Heart right ventricle (tissue), 16 donors: ENCODE measurements at regions of chr17 and their contacts with region 1.

Region 1: DNA sequence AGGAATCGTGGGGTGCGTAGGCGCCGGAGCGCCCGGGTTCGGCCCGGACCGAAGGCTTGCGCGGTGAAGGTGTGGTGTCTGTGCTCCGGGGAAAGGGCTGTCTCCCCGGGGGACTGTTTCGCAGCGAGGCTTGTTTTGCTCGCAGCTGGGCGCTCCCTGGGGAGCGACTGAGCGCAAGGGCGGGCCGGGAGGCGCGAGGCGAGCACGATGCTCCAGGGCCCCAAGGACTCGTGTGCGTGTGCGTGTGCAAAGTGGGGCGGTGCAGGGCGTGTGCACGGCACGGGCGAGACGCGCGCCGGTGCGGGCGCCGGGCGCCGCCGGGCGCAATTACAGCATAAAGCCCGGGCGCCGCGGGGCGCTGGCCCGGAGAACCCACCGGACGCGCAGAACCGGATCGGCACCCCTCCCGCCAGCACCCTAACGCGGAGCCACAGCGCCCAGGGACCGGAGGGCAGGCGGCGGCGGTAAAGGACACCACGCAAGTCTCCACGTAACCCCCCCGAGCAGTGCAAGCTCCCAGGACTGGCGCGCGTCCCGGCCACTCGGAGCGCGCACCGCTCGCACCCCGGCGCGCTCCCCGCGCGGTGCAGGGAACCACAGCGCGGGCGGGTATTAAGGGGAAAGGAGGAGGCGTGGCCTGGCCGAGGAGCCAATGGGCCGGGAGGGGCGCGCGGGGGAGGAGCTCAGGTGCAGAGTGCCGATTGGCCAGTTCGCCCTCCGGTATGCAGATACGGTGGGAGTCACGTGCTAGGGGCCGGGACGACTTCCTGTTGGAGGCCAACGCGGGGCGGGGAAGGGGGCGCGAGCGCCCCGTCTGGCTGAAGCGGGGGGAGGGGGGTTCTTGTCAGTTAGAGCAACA is at the start of gene TNRC6C:
- DNase-seq: peak; percentile 100
- ATAC-seq: peak; percentile 98 to 100 (median 99)
- H3K4me3 ChIP-seq: peak within 1 kb of the TSS; percentile 66 to 99 (median 76)
- H3K27ac ChIP-seq: peak within 1 kb of the TSS; percentile 70 to 96 (median 86)
- H3K4me1 ChIP-seq: peaks cover 0 to 48% (median 35%) of the 10 kb centered on the region in 9 donors
- H3K27me3 ChIP-seq: peaks cover 0 to 40% (median 0%) of the 10 kb centered on the region in 7 donors
- CTCF ChIP-seq: peak in 4 of 9 donors; percentile 22 to 44 (median 30)
- total RNA-seq, gene TNRC6C: 17.1 to 31.4 (median 25.9) TPM

Region 2: GRCh38 chr17:77772461-77772897 is 185.6 kb before region 1 on chr17:
- intact Hi-C with region 1: loop called in 5 of 10 experiments (anchors 5 to 10 kb)
- DNase-seq: peak; percentile 73 to 76
- ATAC-seq: peak; percentile 84 to 95 (median 92)
- H3K4me3 ChIP-seq: no peak overlapping the region
- H3K27ac ChIP-seq: peak overlapping the region in 6 of 10 donors; percentile 2 to 53 (median 22)
- H3K4me1 ChIP-seq: peaks cover 8 to 16% (median 13%) of the 10 kb centered on the region in 9 donors
- H3K27me3 ChIP-seq: no peaks in the 10 kb centered on the region
- CTCF ChIP-seq: peak; percentile 56 to 90 (median 80)

Region 3: DNA sequence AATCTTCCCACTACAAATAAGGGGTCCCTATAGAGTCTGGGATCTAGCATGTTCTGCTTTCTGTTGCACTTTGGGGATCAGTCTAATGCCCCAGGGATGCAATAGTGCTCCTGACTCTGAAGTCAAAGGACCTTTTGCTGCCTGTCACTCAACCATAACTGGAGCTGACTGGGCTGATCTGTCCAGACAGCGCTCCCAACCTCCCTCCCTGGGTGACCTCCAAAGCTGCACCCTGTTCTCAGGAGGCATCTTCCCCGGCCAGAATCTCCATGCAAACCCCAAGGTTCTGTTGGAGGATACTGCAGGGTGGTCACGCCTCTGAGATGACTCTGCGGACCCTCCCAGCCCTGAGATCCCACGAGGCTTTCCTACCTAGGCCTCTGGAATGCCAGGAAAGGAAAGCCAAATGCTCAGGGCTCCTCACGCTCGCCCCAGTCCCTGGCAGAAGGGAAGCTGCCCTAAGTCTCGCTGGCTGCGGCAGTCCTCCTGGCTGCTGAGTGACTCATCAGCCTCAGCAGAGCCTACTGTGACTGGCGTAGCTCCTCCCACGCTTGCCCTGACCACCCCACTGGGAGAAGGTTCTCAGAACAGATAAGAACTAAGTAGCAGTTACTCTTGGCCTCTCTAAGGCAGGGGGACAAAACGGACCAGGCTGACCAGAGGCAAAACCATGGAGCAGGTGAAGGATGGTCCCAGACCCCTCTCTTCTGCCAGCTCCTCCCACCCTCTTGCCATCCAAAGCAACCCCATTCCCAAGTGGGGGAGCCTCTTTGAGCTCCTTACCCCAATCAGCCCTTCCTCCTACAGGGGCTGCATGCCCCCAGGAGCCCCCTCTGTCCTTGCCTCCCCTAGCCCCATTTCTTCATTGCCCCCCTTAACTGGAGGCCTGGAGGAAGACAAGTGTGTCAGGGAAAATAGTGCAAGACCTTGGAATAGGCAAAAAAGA is 123.6 kb before region 1 on chr17:
- intact Hi-C with region 1: loop called in 1 of 10 experiments (anchors 2 kb)
- DNase-seq: peak; percentile 67 to 68
- ATAC-seq: peak in 7 of 8 donors; percentile 15 to 70 (median 35)
- H3K4me3 ChIP-seq: peak overlapping the region in 1 of 10 donors; percentile 10
- H3K27ac ChIP-seq: peak overlapping the region in 7 of 10 donors; percentile 19 to 70 (median 56)
- H3K4me1 ChIP-seq: peaks cover 28 to 63% (median 48%) of the 10 kb centered on the region in 9 donors
- H3K27me3 ChIP-seq: peaks cover 0 to 3% (median 0%) of the 10 kb centered on the region in 7 donors
- CTCF ChIP-seq: no peak

Region 4: DNA sequence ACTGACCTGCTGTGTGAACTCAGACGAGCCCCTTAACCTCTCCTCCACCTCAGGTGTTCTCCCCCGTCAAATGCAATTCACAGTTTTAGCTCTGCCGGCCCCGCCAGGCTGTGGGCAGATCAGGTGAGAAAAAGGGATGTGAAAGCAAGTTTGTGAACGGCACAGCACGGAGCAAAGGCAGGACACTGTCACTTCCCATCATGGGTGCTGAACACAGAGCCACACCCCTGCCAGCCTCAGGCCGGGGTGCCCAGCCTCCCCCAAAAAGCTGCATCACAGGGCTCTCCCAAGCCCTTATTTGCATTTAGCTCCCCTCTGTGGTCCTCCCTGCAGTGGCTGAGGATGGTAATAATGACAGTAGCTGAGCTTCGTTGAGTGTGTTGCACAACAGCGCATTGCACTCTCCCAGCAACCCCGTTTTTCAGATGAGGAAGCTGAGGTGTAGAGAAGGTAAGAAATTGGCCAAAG is 88.4 kb before region 1 on chr17:
- intact Hi-C with region 1: no loop called
- DNase-seq: peak in 1 of 2 donors; percentile 14
- ATAC-seq: peak in 2 of 8 donors; percentile 18 to 19
- H3K4me3 ChIP-seq: peak overlapping the region in 1 of 10 donors; percentile 14
- H3K27ac ChIP-seq: peak overlapping the region in 1 of 10 donors; percentile 74
- H3K4me1 ChIP-seq: peaks cover 0 to 35% (median 9%) of the 10 kb centered on the region in 9 donors
- H3K27me3 ChIP-seq: no peaks in the 10 kb centered on the region
- CTCF ChIP-seq: no peak

Region 5: GRCh38 chr17:77881545-77881944 is 76.5 kb before region 1 on chr17:
- intact Hi-C with region 1: loop called in 3 of 10 experiments (anchors 5 kb)
- DNase-seq: peak; percentile 89
- ATAC-seq: peak; percentile 83 to 94 (median 92)
- H3K4me3 ChIP-seq: peak overlapping the region in 2 of 10 donors; percentile 10 to 13
- H3K27ac ChIP-seq: peak overlapping the region in 9 of 10 donors; percentile 58 to 93 (median 77)
- H3K4me1 ChIP-seq: peaks cover 25 to 57% (median 37%) of the 10 kb centered on the region in 9 donors
- H3K27me3 ChIP-seq: no peaks in the 10 kb centered on the region
- CTCF ChIP-seq: no peak

Region 6: DNA sequence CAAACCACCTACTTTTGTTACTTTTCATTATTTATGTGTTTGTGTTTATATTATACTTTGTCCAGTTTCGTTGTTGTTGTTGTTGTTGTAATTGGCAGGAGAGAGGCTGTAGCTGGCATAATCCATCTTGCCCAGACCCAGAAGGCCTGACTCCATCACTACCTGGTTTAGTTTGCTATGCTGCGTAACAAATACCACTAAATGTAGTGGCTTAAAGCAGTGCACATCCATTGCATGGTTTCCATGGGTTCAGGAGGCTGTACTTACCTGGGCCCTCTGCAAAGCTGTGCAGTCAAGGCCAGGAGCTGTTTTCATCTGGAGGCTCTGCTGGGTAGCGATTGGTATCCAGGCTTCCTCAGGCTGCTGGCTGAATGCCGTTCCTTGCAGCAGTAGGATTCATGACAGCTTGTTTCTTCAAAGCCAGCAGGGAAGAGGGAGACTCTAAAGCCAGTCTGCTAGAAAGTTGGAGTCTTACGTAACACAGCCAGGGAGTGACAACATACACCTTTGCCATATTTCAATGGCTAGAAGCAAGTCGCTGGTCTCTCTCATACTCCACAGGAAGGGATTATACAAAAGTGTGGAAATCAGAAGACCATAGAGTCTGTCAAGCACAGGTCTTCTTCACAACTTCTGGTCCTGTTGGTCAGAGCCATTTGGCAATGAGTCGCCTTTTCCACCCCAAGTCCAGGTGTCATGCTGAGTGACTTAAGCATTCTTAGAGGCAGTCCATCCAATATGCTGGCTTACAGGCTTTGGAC is 41.5 kb after region 1 on chr17:
- intact Hi-C with region 1: loop called in 4 of 10 experiments (anchors 5 kb)
- DNase-seq: no peak
- ATAC-seq: no peak
- H3K4me3 ChIP-seq: no peak overlapping the region
- H3K27ac ChIP-seq: peak overlapping the region in 3 of 10 donors; percentile 9 to 13 (median 11)
- H3K4me1 ChIP-seq: peaks cover 8 to 81% (median 46%) of the 10 kb centered on the region in 9 donors
- H3K27me3 ChIP-seq: no peaks in the 10 kb centered on the region
- CTCF ChIP-seq: no peak

Region 7: GRCh38 chr17:78032166-78032565 is 74.1 kb after region 1 on chr17:
- intact Hi-C with region 1: no loop called
- DNase-seq: no peak
- ATAC-seq: peak in 1 of 8 donors; percentile 27
- H3K4me3 ChIP-seq: no peak overlapping the region
- H3K27ac ChIP-seq: peak overlapping the region in 2 of 10 donors; percentile 9 to 23
- H3K4me1 ChIP-seq: peaks cover 0 to 35% (median 10%) of the 10 kb centered on the region in 9 donors
- H3K27me3 ChIP-seq: no peaks in the 10 kb centered on the region
- CTCF ChIP-seq: no peak